ACHN (cell line): ENCODE measurements at regions of chr17 and their contacts with region 1.

Region 1: GRCh38 chr17:1783834-1784611 is 22.2 kb downstream of the SERPINF1 start:
- DNase-seq: peak; percentile 62

Region 2: GRCh38 chr17:1736348-1737281 is 47.4 kb before region 1 on chr17:
- in situ Hi-C with region 1: loop called (anchors 10 kb)
- DNase-seq: peak; percentile 44

Region 3: DNA sequence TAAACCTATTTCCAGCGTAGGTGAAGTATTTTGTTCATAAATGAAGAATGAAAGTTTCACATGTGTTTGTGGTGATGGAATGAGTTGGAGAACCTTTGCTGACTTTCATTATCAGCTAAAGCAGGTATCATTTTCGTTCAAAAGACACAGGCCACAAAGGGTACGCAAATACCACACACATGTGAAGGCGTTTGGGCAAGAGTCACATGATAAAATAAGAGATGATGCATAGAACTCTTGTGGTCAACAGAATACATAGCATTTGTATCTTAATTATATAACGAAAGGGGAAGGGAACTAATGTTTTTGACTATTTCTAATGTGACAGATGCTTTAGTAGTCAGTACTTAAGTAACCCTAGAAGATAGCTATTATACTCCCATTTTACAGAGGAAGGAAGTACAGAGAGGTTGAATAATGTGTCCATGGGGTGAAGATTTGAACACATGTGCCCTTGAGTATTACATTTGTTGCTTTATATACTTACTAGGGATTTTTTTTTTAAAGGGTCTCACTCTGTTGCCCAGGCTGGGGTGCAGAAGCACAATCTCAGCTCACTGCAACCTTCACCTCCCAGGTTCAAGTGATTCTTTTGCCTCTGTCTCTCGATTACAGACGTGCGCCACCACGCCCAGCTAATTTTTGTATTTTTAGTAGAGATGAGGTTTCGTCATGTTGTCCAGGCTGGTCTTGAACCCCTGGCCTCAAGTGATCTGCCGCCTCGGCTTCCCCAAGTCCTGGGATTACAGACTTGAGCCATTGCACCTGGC is 50.5 kb after region 1 on chr17:
- in situ Hi-C with region 1: no loop called
- DNase-seq: no peak

Region 4: GRCh38 chr17:1890758-1891450 is 106.9 kb after region 1 on chr17:
- in situ Hi-C with region 1: no loop called
- DNase-seq: no peak

Region 5: GRCh38 chr17:1931759-1932579 is 147.9 kb after region 1 on chr17:
- in situ Hi-C with region 1: no loop called
- DNase-seq: peak; percentile 23

Region 6: GRCh38 chr17:2025622-2026310 is 241.7 kb after region 1 on chr17:
- in situ Hi-C with region 1: no loop called
- DNase-seq: peak; percentile 80